PC-3 (cell line): ENCODE measurements at regions of chr21 and their contacts with region 1.

Region 1: GRCh38 chr21:41899426-41900202 is 20.5 kb upstream of the PRDM15 start:
- DNase-seq: no peak
- ATAC-seq: no peak
- H3K4me3 ChIP-seq: no peak overlapping the region
- H3K27ac ChIP-seq: no peak overlapping the region
- H3K4me1 ChIP-seq: peaks cover 18% of the 10 kb centered on the region
- H3K27me3 ChIP-seq: no peaks in the 10 kb centered on the region
- CTCF ChIP-seq: no peak

Region 2: DNA sequence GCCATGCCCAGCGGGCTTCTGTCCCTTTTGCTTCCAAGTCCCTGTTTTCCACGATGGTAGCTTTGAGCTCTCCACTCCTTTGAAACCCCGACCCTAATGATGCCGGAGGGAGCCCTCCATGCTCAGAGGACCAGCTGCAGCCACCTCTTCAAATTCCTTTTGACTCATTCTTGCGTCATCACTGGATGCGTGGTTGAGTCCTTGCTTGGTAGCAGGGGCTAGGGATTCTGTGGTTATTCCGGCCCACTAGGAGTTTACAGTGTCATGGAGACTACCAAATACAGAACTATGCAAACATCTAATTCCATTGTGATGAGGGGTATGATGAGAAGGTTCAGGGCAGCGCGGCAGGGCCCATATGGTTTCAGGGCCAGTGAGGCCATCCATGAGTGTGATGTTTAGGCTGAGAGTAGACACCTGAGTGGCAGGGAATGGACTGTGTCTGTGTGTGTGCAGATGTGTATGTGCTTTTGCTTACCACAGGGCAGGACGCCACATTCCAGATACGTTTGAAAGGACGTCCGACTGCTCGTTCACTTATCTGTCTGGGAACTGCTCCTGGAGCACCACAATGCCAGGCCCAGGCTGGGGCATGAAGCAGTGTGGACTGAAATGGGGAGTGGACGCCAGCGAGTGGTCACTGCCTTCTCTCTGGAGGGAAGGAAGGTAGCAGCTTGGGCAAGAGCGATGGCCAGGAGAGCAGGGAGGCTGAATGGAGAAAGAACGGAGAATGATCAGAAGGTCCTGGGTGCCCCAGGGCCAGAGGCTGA is 141.0 kb after region 1 on chr21:
- CTCF ChIA-PET with region 1: no interaction called
- POLR2A ChIA-PET with region 1: interaction called, 14 read pairs
- intact Hi-C with region 1: no loop called
- DNase-seq: peak; percentile 99
- ATAC-seq: peak; percentile 97
- H3K4me3 ChIP-seq: no peak overlapping the region
- H3K27ac ChIP-seq: peak overlapping the region; percentile 85
- H3K4me1 ChIP-seq: peaks cover 31% of the 10 kb centered on the region
- H3K27me3 ChIP-seq: no peaks in the 10 kb centered on the region
- CTCF ChIP-seq: no peak